CD8-positive, alpha-beta T cell (primary cell): ENCODE measurements at regions of chr16 and their contacts with region 1.

Region 1: DNA sequence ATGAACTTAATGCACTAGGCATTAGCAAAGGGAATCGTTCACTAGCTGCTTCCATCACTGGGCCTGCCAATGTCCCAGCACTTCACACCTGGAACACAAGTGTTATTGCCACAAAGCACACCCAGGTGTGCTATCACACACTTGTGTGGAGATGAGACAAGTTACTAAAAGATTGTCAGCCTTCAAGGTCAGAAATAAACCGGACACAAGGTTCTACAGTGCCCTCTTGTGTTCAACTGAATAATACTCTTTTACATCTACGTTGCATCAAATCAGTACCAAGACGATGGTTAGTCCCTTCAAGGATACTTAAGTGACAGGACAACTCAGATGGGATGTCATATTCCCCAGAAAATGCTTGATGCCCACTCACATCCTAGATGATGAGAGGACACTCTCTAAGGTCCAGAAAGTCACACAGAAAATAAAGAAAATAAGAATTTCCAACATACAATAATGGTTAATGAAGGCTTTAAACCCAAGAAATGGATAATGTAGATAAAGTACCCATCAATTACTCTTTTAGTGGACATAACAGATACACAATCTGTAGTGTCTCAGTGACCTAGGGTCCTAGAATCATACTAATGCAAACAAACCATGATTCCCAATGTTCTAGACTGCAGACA is 16.4 kb upstream of the GLG1 start:
- DNase-seq: peak in 2 of 9 experiments; percentile 56 to 69
- ATAC-seq: peak; percentile 38
- H3K4me3 ChIP-seq: no peak overlapping the region
- H3K4me3 Mint-ChIP-seq: no peak overlapping the region
- H3K27ac ChIP-seq: no peak overlapping the region
- H3K27ac Mint-ChIP-seq: no peak overlapping the region
- H3K4me1 ChIP-seq: no peaks in the 10 kb centered on the region
- H3K4me1 Mint-ChIP-seq: peaks cover 2% of the 10 kb centered on the region
- H3K27me3 ChIP-seq: no peaks in the 10 kb centered on the region
- H3K27me3 Mint-ChIP-seq: no peaks in the 10 kb centered on the region
- CTCF ChIP-seq: peak; percentile 65

Region 2: DNA sequence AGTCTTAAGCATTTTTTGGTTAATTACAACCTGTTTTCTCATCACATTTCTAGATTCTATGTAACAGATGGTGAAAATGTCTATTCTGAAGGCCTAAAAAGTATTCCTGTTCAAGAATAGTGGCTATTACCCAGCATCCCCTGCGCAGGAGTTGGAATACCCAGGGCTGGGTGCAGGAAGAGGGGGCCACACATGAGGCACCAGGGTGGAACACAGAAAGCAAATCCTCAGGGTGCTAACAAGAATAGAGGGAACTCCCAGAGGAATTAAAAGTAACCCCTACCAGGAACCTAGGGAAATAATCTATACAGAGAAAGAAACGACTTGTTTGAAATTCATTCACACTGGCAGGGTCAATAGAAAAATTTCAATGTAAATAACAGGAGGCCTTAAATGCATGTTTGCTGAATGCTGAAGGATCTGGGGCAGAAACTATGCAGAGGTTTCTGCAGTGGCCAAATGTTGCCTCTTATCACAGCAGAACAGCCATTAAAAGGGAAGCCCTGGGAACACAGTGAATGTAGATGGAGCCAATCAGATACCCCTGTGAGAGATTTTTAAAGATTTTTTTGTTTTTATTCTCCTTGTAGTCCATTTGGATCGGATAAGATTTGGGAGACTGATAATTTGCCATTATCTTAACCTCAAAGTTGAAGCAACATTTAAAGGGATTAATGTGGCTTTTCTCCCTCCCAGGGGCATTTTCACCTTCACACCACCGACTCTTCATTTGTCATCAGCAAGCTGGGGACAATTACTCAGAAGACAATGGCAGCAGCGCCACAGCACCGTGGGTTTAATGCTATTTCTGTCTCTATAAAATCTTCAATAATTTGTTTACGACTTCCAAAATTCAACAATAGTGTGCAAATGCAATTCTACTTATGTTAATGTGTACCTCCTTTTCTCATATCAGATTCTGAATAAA is 522.7 kb before region 1 on chr16:
- CTCF ChIA-PET with region 1: no interaction called
- POLR2A ChIA-PET with region 1: no interaction called
- intact Hi-C with region 1: no loop called
- DNase-seq: no peak
- ATAC-seq: no peak
- H3K4me3 ChIP-seq: no peak overlapping the region
- H3K4me3 Mint-ChIP-seq: no peak overlapping the region
- H3K27ac ChIP-seq: no peak overlapping the region
- H3K27ac Mint-ChIP-seq: no peak overlapping the region
- H3K4me1 ChIP-seq: no peaks in the 10 kb centered on the region
- H3K4me1 Mint-ChIP-seq: no peaks in the 10 kb centered on the region
- H3K27me3 ChIP-seq: no peaks in the 10 kb centered on the region
- H3K27me3 Mint-ChIP-seq: no peaks in the 10 kb centered on the region
- CTCF ChIP-seq: no peak

Region 3: DNA sequence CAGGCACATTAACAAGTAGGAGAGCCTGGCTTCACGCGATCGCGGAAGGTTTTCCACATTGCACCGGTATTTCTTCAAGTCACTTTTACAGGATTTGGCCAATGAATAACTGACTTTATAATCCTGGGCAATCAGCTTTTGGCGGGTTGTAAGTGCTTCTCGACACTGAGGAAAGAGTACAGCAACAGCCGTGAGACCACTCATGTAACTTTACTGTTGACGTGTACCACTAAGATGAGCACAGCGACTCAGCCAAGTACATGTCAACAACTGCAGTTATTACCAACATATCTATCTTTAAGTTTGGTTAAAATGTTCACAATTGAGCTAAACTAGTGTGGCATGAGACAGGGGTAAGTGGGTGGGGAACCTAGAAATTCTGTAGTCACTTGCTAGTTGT is 130.4 kb before region 1 on chr16:
- CTCF ChIA-PET with region 1: interaction called, 12 read pairs
- POLR2A ChIA-PET with region 1: no interaction called
- intact Hi-C with region 1: no loop called
- DNase-seq: no peak
- ATAC-seq: no peak
- H3K4me3 ChIP-seq: no peak overlapping the region
- H3K4me3 Mint-ChIP-seq: no peak overlapping the region
- H3K27ac ChIP-seq: no peak overlapping the region
- H3K27ac Mint-ChIP-seq: no peak overlapping the region
- H3K4me1 ChIP-seq: no peaks in the 10 kb centered on the region
- H3K4me1 Mint-ChIP-seq: no peaks in the 10 kb centered on the region
- H3K27me3 ChIP-seq: no peaks in the 10 kb centered on the region
- H3K27me3 Mint-ChIP-seq: no peaks in the 10 kb centered on the region
- CTCF ChIP-seq: no peak

Region 4: DNA sequence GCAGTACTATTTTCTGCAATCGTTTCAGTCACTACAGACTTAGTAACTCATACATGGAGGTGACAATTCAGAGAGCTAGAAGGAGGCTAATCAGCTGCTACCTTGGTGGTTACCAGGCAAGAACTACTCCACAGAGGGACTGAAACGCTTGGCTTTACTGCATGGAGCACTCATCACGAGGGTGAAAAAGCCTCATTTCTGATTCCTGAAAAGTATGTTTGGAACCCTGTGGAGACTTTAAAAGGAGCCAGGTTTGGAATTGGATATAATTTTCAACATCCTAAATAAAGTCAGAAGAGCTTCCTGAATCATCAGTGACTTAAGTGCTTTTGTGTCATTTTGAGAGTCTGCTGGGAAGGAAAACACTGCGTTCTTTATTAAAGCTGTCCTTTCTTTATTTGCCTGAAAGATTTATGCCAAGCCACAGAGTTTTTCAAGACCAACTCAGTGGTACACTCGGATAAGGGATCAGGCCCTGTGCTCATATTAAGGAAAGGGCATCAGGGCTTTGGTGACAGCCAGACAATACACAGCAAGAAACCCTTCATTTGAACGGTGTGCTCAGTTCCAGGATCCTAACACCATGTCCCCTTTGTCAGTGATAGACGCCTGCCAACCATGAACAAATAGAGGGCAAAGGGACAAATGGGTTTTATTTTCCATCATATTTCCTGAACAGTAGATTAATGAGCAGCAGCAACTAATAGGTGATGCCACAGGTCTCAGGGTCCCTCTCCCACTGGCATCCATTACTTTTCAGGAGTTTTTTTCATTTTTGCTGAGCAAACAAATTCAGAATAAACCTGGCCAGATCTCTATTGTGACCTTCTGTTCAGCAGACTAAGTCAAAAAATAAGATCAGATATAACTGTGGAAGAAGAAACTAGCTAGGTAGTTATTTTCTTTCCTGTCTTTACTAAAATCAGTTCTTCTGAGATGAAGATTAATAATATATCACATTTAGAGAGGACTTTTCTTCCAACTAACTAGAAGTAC is 121.5 kb before region 1 on chr16:
- CTCF ChIA-PET with region 1: interaction called, 8 read pairs
- POLR2A ChIA-PET with region 1: no interaction called
- intact Hi-C with region 1: loop called (anchors 5 kb)
- DNase-seq: no peak
- ATAC-seq: no peak
- H3K4me3 ChIP-seq: no peak overlapping the region
- H3K4me3 Mint-ChIP-seq: no peak overlapping the region
- H3K27ac ChIP-seq: no peak overlapping the region
- H3K27ac Mint-ChIP-seq: peak overlapping the region; percentile 58
- H3K4me1 ChIP-seq: no peaks in the 10 kb centered on the region
- H3K4me1 Mint-ChIP-seq: peaks cover 21% of the 10 kb centered on the region
- H3K27me3 ChIP-seq: no peaks in the 10 kb centered on the region
- H3K27me3 Mint-ChIP-seq: no peaks in the 10 kb centered on the region
- CTCF ChIP-seq: no peak

Region 5: DNA sequence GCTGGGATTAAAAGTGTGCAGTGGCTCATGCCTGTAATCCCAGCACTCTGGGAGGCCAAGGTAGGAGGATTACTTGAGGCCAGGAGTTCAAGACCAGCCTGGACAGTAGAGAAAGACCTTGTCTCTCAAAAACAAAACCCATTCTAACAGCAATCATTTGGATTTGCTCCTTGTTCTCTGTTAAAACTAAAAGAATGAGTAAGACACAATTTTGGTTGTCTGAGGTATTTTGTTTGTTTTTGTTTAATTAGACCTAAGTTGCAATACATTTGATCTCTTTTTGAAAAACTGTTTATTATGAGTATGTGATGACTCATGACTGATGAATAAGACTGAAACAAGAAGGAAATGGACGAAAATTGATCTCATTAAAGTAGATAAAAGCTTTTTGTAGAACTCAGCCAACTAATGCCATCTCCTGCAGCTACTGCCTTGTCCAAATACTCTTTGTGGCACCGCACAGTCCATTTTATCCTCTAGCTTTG is 45.4 kb before region 1 on chr16:
- CTCF ChIA-PET with region 1: no interaction called
- POLR2A ChIA-PET with region 1: no interaction called
- intact Hi-C with region 1: loop called in 1 of 2 experiments (anchors 10 kb)
- DNase-seq: no peak
- ATAC-seq: no peak
- H3K4me3 ChIP-seq: no peak overlapping the region
- H3K4me3 Mint-ChIP-seq: no peak overlapping the region
- H3K27ac ChIP-seq: no peak overlapping the region
- H3K27ac Mint-ChIP-seq: peak overlapping the region; percentile 20
- H3K4me1 ChIP-seq: peaks cover 61% of the 10 kb centered on the region
- H3K4me1 Mint-ChIP-seq: peaks cover 63% of the 10 kb centered on the region
- H3K27me3 ChIP-seq: no peaks in the 10 kb centered on the region
- H3K27me3 Mint-ChIP-seq: no peaks in the 10 kb centered on the region
- CTCF ChIP-seq: no peak